ENCODE measurements at regions of chr1 and their contacts with region 1.

Region 1: DNA sequence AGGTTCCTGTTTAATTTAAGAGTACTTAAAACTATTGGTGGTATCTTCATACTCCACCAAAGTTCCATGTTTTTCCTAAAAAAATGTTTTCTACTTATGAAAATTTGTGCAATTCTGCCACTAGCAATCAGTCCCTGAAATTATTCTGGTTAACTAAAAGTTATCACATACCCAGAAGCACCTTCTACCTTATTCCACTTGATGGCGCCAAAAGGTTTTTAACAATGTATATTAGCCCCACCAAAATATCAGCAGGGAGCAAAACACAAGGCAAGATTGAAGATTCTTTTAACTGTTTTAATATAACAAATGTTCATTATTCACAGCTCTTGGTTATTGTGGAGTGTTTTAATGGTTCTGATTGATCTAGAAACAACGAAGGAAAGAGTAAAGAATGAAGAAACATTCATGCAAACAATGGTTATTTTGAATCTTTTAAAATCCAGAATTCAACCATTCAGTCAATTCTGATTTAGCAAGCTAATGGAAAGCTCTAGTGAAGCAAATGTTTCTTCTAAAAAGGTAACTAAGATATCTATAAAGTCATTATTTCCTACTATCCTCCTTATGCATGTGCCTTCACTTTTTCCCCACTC is 67.2 kb downstream of the TTLL7 start:
- DNase-seq: no peak
- H3K4me3 ChIP-seq: no peak overlapping the region
- H3K27ac ChIP-seq: no peak overlapping the region
- H3K4me1 ChIP-seq: no peaks in the 10 kb centered on the region
- H3K27me3 ChIP-seq: no peaks in the 10 kb centered on the region
- CTCF ChIP-seq: peak; percentile 80

Region 2: GRCh38 chr1:84122780-84123382 is 191.1 kb after region 1 on chr1:
- intact Hi-C with region 1: loop called (anchors 5 kb)
- DNase-seq: no peak
- H3K4me3 ChIP-seq: no peak overlapping the region
- H3K27ac ChIP-seq: no peak overlapping the region
- H3K4me1 ChIP-seq: peaks cover 17% of the 10 kb centered on the region
- H3K27me3 ChIP-seq: no peaks in the 10 kb centered on the region
- CTCF ChIP-seq: peak; percentile 76

Region 3: GRCh38 chr1:84143796-84144565 is 212.2 kb after region 1 on chr1 and contains the start of gene PRKACB:
- intact Hi-C with region 1: no loop called
- DNase-seq: no peak
- H3K4me3 ChIP-seq: peak within 1 kb of the TSS; percentile 28
- H3K27ac ChIP-seq: peak within 1 kb of the TSS; percentile 8
- H3K4me1 ChIP-seq: peaks cover 9% of the 10 kb centered on the region
- H3K27me3 ChIP-seq: no peaks in the 10 kb centered on the region
- CTCF ChIP-seq: no peak
- total RNA-seq, gene PRKACB: 34.9 TPM

Region 4: DNA sequence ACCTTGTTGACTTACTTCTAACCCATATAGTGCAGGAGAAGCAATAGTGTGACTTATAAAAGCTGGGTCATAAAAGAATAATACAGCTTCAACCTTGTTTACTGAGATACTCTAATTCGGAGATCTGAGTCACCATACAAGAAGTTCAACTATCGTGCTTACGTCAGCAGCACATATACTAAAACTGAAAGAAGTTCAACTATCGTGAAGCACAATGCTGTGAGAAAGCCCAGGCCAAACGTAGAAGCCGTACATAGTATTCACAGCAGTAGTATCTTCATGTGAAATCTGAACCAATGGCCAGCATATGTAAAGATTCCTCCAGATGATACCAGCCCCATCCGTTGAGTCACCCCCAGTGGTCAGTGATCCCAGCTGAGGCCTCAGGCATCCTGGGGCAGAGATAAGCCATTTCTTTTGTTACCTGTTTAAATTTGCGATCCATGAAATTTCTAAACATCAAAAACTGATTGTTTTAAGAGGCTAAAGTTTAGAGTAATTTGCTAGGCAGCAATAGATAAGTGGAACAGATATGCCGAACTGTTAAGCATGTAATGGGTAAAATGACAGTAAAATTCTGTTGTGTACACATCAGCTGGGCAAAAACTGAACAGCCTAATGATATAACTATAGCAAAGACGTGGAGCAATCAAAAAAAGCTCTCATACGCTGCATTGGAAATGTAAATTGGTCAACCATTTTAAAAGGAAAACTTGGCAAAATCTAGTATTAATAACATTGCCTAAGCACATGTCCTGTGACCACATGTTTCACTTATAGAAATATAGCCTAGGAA is 315.9 kb after region 1 on chr1:
- intact Hi-C with region 1: no loop called
- DNase-seq: no peak
- H3K4me3 ChIP-seq: no peak overlapping the region
- H3K27ac ChIP-seq: no peak overlapping the region
- H3K4me1 ChIP-seq: no peaks in the 10 kb centered on the region
- H3K27me3 ChIP-seq: no peaks in the 10 kb centered on the region
- CTCF ChIP-seq: no peak